HEK293 (cell line): ENCODE measurements at regions of chr9 and their contacts with region 1.

Region 1: GRCh38 chr9:129737479-129738274 is 15.2 kb downstream of the PTGES start:
- H3K4me3 ChIP-seq: peak overlapping the region; percentile 40
- H3K27ac ChIP-seq: no peak overlapping the region; the same call in 1 of the 2 replicates
- H3K4me1 ChIP-seq: no peaks in the 10 kb centered on the region
- CTCF ChIP-seq: peak; percentile 90

Region 2: DNA sequence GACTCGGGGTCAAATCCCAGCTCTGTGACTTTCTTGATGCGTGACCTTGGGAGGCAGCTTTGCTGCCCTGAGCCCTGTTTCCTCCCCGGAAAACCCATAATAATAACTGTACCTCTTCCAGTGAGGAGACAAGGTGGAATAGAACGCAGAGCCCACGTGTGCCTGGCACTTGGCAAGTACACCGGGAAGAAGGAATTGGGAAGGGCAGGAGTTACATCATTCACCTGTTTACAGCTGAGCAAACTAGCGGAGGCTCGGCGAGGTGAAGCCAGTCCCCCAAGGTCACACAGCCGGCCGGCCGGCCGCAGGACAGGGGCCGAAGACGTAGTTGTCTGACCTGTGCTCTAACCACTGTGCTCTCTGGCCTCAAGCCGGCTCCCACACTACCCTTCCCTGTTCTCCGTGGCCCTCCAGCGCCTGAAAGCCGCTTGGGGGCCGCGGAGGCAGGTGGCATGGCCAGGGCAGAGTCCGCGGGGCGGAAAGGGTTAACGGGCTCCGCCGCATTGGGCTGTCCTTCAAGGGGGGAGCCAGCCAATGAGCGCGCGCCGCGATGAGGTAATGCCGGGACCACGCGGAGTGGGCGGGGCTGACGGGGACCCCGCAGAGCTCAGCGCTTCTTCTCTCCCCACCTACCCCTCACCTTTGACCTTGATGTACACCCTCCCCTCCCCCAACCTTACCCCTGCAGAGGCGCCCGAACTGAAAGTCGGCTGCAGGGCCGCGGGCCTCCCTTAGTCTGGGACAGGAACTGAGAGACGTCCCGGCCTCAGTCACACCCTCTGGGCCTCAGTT is 241.9 kb before region 1 on chr9:
- CTCF ChIA-PET with region 1: no interaction called
- POLR2A ChIA-PET with region 1: no interaction called
- H3K4me3 ChIP-seq: peak overlapping the region; percentile 25
- H3K27ac ChIP-seq: peak overlapping the region; percentile 87
- H3K4me1 ChIP-seq: 0 out of 2 replicates have a peak, but pooled peaks cover 2% of the 10 kb centered on the region
- CTCF ChIP-seq: no peak

Region 3: GRCh38 chr9:129712634-129713401 is 24.9 kb before region 1 on chr9:
- CTCF ChIA-PET with region 1: interaction called, 21 read pairs
- POLR2A ChIA-PET with region 1: no interaction called
- H3K4me3 ChIP-seq: no peak overlapping the region
- H3K27ac ChIP-seq: peak overlapping the region; percentile 85
- H3K4me1 ChIP-seq: peaks cover 13% of the 10 kb centered on the region
- CTCF ChIP-seq: no peak

Region 4: GRCh38 chr9:129726322-129727160 is 11.1 kb before region 1 on chr9:
- CTCF ChIA-PET with region 1: interaction called, 124 read pairs
- POLR2A ChIA-PET with region 1: interaction called, 5 read pairs
- H3K4me3 ChIP-seq: no peak overlapping the region
- H3K27ac ChIP-seq: no peak overlapping the region
- H3K4me1 ChIP-seq: no peaks in the 10 kb centered on the region
- CTCF ChIP-seq: peak; percentile 87

Region 5: GRCh38 chr9:129761901-129762364 is 24.3 kb after region 1 on chr9:
- CTCF ChIA-PET with region 1: interaction called, 26 read pairs
- POLR2A ChIA-PET with region 1: interaction called, 3 read pairs
- H3K4me3 ChIP-seq: no peak overlapping the region
- H3K27ac ChIP-seq: no peak overlapping the region
- H3K4me1 ChIP-seq: no peaks in the 10 kb centered on the region
- CTCF ChIP-seq: no peak

Region 6: DNA sequence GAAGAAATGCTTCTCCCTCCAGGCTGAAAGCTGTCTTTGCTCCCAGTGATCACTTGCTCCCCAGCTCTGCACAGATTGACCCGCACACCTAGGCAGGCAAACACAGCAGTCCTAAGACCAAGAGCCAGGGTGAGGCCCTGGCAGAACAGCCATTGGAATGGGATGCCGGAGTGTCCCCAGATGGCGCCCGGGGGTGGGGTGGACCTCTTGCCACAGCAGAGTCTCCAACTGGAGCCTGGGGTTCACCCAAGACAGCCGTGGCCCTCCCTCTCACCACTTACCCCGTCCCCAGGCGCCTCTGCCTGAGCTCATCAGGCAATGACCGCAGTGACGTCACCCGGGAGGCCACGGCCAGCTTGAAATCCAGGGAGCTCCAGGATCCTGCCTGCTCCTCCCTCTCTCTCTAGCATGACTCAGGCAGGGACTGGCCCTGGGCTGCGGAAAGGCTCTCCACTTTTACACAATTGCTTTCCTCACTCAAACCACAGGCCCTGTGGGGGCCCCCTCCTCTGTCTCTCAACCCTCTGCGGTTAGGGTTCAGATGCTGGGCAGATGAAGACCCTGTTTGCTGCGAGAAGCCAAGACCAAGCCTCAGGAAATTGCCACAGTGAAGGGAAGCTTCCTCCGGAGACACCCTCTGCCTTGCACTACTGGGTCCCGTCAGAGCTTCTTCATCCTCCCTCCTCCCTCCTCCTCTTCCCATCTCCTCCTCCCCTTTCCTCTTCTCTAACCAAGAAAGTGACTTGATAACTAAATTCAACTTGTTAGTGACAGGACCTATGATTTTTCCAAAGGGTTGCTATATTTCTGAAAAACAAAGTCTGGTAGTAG is 39.5 kb after region 1 on chr9:
- CTCF ChIA-PET with region 1: interaction called, 220 read pairs
- POLR2A ChIA-PET with region 1: interaction called, 17 read pairs
- H3K4me3 ChIP-seq: peak overlapping the region; percentile 18
- H3K27ac ChIP-seq: no peak overlapping the region
- H3K4me1 ChIP-seq: no peaks in the 10 kb centered on the region
- CTCF ChIP-seq: no peak